ENCODE measurements at regions of chr5 and their contacts with region 1.

Region 1: DNA sequence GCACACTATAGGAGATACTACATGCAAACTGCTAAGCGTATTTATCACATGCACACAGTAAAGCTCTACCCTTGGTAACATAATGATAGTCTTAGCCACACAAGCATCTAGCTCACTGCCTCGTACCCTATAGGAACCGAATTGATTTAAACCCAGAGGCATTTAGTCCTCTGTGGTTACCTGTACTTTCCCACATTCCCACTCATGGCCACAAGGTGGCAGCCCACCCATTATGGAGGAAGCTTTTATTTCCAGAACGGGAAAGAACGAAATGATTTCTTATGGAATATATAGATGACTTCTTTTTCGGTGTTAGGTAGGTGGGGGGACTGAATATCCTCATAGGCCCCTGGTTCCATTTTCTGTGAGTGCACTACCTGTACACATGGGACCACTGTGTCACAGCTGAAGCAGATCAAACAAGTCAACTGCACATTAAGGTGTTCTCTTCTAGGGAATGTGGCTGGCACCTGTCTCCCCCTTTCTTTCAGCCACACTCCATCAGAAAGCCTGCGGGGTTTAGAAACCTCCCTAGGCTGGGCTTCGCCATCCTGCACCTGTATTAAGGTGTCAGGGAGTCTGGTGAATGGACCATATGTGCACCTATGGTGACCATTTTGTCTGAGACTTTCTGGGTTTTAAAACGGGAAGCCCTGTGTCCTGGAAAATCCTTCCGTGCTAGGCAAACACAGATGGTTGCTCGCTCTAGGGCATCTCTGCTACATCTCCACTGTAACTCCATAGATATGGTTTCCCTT is 313.2 kb downstream of the SLIT3 start:
- DNase-seq: peak; percentile 76
- ATAC-seq: peak; percentile 82
- H3K4me3 ChIP-seq: no peak overlapping the region
- H3K27ac ChIP-seq: no peak overlapping the region
- H3K4me1 ChIP-seq: peaks cover 9% of the 10 kb centered on the region
- H3K27me3 ChIP-seq: peaks cover 8% of the 10 kb centered on the region
- CTCF ChIP-seq: peak; percentile 88

Region 2: DNA sequence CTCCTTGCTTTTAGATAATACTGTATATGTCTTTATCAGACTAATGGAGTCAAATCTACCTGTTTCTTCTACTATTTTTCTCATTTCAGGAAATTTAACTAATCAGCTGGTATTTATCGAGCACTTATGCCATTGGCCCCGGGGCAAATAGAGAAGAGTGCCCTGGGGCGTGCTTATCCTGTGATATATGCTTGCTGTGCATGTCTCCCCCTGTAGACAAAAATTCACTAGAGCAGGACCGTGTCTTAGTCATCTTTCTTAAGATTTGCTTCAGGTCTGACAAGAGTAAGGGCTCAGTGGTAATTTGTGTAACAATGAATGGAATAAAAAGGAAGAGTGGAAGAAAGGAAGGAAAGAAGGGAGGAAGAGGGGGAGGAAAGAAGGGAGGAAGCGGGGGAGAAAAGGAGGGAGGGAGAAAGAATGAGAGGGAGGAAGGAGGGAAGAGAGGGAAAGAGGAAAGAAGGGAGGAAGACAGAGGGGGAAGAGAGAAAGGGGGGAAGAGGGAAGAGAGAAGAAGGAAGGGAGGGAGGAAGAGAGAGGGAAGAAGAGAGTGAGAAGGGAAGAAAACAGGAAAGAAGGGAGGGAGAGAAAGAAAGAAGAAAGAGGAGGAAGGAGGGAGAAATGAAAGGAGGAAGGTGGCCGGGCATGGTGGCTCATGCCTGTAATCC is 112.9 kb before region 1 on chr5:
- intact Hi-C with region 1: no loop called
- DNase-seq: no peak
- ATAC-seq: no peak
- H3K4me3 ChIP-seq: no peak overlapping the region
- H3K27ac ChIP-seq: no peak overlapping the region
- H3K4me1 ChIP-seq: no peaks in the 10 kb centered on the region
- H3K27me3 ChIP-seq: no peaks in the 10 kb centered on the region
- CTCF ChIP-seq: no peak

Region 3: GRCh38 chr5:169050146-169050571 is 62.4 kb after region 1 on chr5:
- intact Hi-C with region 1: no loop called
- DNase-seq: no peak
- ATAC-seq: no peak
- H3K4me3 ChIP-seq: no peak overlapping the region
- H3K27ac ChIP-seq: no peak overlapping the region
- H3K4me1 ChIP-seq: peaks cover 5% of the 10 kb centered on the region
- H3K27me3 ChIP-seq: no peaks in the 10 kb centered on the region
- CTCF ChIP-seq: no peak

Region 4: GRCh38 chr5:169302491-169303118 is 314.9 kb after region 1 on chr5:
- intact Hi-C with region 1: loop called (anchors 10 kb)
- DNase-seq: peak; percentile 80
- ATAC-seq: peak; percentile 77
- H3K4me3 ChIP-seq: no peak overlapping the region
- H3K27ac ChIP-seq: no peak overlapping the region
- H3K4me1 ChIP-seq: no peaks in the 10 kb centered on the region
- H3K27me3 ChIP-seq: peaks cover 41% of the 10 kb centered on the region
- CTCF ChIP-seq: peak; percentile 90

Measured in upper lobe of right lung (tissue), 1 donor.